Activated CD4-positive, alpha-beta T cell treated with anti-CD3 and anti-CD28 coated beads for 36 hours (primary cell): ENCODE measurements at regions of chr13 and their contacts with region 1.

Region 1: GRCh38 chr13:98672944-98673545 is 79.4 kb downstream of the SLC15A1 start:
- DNase-seq: peak; percentile 66
- ATAC-seq: peak; percentile 69
- H3K4me3 Mint-ChIP-seq: no peak overlapping the region
- H3K27ac Mint-ChIP-seq: no peak overlapping the region
- H3K4me1 Mint-ChIP-seq: no peaks in the 10 kb centered on the region
- H3K27me3 Mint-ChIP-seq: peaks cover 5% of the 10 kb centered on the region

Region 2: DNA sequence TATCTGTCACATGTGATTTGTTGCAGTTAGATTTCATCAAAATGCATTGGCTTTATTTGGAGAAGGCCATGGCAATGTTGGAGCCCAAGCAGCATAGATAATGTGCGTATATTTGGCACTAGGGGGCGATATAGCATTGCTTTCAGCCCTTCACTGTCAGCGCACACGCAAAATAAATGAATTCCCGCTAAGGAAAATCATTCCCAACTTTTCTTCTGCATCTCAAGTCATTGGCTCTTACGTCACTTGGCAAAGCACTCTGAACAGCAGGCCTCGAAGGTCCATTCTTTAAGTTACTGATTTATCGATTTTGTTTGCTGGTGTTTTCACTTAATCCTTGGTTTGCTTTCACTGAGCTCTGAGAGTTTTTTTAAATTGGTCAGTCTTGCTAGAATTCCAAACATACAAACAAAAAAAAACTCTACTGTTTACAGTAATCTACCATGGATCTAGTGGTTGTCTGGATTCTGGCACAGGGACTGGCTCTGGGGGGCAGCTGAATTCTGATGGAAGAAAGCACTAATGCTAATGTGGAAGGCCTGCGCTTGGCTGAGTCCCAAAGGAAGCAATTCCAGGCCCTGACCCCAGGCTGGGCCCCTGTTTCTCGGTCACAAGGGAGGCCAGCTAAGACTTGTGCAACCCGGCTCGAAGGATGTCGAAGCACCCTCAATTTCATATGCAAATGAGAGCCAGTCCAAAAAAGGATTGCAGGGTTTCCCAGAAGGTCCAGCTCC is 817.3 kb before region 1 on chr13:
- CTCF ChIA-PET with region 1: interaction called, 5 read pairs
- POLR2A ChIA-PET with region 1: no interaction called
- intact Hi-C with region 1: loop called (anchors 1 to 10 kb)
- DNase-seq: peak; percentile 26
- ATAC-seq: peak; percentile 39
- H3K4me3 Mint-ChIP-seq: no peak overlapping the region
- H3K27ac Mint-ChIP-seq: no peak overlapping the region
- H3K4me1 Mint-ChIP-seq: no peaks in the 10 kb centered on the region
- H3K27me3 Mint-ChIP-seq: peaks cover 13% of the 10 kb centered on the region

Region 3: DNA sequence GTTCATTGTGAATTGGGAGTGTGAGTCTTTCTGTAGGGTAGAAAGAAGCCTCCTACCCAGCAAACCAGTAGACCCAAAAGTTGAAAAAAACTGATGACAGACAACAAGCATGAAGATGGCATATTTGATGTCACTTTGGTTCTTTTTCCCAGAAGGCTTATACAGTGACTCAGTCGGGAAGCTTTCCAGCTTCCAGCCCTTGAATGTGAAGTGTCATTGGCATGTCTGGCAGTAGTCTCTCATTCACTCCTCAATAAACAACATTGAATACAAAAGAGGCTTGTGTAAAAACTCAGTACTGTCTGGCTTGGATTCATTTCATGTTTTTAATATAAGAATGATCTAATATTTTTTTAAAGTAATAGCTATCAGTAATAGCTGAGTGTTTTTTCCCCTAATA is 650.8 kb before region 1 on chr13:
- CTCF ChIA-PET with region 1: no interaction called
- POLR2A ChIA-PET with region 1: no interaction called
- intact Hi-C with region 1: loop called in 1 of 2 experiments (anchors 10 kb)
- DNase-seq: no peak
- ATAC-seq: no peak
- H3K4me3 Mint-ChIP-seq: no peak overlapping the region
- H3K27ac Mint-ChIP-seq: no peak overlapping the region
- H3K4me1 Mint-ChIP-seq: no peaks in the 10 kb centered on the region
- H3K27me3 Mint-ChIP-seq: no peaks in the 10 kb centered on the region

Region 4: DNA sequence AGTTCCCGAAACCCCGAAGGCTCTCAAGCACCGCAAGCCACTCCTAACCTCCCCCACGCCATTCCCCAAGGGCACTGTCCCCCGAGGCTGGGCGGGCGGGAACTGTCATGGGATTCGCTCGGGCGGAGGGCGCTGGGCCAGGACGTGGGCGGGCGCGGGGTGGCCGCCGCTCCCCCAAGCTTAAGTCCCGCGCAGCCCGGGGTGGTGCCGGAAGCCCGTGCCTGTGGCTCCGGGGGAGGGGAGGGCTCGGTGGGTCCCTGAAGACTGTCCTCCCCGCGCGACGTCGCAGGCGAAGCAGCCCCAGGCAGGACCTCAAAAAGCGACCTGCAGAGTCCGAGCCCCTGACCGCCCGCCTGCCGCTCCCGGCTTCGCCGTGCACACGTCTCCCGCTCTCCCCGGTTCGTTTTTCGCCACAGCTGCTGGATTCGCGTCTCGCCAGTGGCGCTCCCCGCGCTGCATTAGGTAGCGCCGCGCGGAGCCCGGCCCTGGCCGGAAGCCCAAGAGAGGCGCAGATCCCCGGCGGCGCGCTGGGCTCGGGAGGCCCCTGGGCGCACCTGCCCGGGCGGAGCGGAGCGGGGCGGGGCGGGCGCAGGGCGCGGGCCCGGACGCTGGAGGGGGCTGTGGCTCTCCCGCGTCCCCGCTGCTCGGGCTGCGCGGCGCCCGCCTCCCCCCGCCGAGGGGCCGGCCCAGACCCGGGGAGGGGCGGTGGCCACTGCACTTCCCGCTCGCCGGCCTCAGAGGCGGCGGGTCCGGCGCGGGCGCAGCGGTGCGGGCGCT is 530.5 kb before region 1 on chr13 and contains the start of gene FARP1:
- CTCF ChIA-PET with region 1: no interaction called
- POLR2A ChIA-PET with region 1: no interaction called
- intact Hi-C with region 1: loop called in 1 of 2 experiments (anchors 2 kb)
- DNase-seq: peak; percentile 68
- ATAC-seq: peak; percentile 94
- H3K4me3 Mint-ChIP-seq: peak within 1 kb of the TSS; percentile 59
- H3K27ac Mint-ChIP-seq: no peak within 1 kb of the TSS
- H3K4me1 Mint-ChIP-seq: peaks cover 8% of the 10 kb centered on the region
- H3K27me3 Mint-ChIP-seq: peaks cover 50% of the 10 kb centered on the region
- total RNA-seq, gene FARP1: 0.25 to 0.40 TPM

Region 5: DNA sequence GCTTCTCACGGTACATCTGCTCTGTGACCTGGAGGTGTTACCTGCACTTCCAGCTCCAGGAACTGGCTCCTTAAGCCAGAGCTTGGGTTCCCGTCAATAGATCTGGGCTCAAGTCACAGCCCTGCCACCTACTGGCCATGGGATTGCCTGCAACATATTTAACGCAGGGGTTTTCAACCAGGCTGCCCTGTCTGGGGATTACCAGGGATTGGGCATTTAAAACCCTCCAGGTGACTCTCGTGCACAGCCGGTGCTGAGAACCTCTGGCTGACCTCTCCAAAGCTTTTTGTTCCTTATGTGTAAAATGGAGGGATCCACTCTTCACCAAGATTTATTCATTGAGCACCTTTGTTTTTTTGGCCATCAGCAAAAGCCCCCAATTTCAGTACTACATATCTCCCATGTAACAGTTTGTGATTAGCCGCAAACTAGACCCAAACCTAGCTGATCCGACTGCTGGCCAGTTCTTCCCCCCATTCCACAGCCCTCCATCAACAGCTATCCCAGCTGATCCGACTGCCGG is 19.5 kb before region 1 on chr13:
- CTCF ChIA-PET with region 1: interaction called, 25 read pairs
- POLR2A ChIA-PET with region 1: no interaction called
- intact Hi-C with region 1: no loop called
- DNase-seq: peak; percentile 86
- ATAC-seq: peak; percentile 100
- H3K4me3 Mint-ChIP-seq: no peak overlapping the region
- H3K27ac Mint-ChIP-seq: peak overlapping the region; percentile 65
- H3K4me1 Mint-ChIP-seq: peaks cover 2% of the 10 kb centered on the region
- H3K27me3 Mint-ChIP-seq: peaks cover 2% of the 10 kb centered on the region